ENCODE measurements at regions of chr1 and their contacts with region 1.

Region 1: DNA sequence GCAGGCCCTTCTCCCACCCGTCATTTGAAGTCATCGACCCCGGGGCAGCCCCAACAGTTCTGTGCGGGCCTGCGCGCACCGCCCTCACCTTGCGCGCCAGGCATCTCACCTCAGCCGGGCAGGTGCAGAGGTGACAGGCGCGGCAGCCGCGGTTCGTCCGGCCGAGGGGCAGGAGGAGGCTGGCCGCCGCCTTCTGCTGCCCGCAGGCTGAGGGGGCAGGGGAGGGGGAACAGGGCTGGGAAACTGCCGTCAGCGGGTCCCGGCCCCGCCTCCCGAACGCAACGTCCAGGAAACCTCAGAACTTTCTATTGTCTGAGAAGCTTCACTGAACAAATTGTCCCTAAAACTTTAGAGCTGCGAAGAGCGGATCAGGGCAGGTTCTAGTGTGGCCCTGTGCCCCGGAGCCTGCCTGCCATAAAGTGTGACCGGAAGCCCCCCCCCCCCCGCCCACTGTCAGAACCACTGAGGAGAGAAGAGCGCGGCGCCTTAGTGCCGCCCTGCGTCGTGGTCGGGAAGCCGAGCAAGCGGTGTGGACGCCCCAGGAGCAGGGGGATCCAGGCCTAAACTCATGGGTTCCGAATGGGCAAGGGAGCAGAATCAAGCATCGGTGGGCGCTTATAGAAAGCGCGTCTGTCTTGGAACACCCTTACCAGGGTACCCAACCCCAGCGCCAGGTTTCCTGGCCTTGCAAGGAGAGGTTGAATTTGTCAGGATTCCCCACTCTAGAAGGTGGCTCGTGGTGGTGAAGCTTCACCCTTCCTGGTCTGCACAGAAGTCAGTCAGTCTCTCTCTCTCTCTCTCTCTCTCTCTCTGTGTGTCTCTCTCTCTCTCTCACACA is 13.3 kb upstream of the TBX15 start:
- DNase-seq: no peak
- H3K4me3 ChIP-seq: peak overlapping the region in 2 of 7 experiments; percentile 29 to 39
- H3K27ac ChIP-seq: no peak overlapping the region
- H3K4me1 ChIP-seq: peaks cover 0 to 23% (median 12%) of the 10 kb centered on the region in 4 experiments
- H3K27me3 ChIP-seq: peaks cover 26 to 100% (median 61%) of the 10 kb centered on the region in 5 experiments

Region 2: DNA sequence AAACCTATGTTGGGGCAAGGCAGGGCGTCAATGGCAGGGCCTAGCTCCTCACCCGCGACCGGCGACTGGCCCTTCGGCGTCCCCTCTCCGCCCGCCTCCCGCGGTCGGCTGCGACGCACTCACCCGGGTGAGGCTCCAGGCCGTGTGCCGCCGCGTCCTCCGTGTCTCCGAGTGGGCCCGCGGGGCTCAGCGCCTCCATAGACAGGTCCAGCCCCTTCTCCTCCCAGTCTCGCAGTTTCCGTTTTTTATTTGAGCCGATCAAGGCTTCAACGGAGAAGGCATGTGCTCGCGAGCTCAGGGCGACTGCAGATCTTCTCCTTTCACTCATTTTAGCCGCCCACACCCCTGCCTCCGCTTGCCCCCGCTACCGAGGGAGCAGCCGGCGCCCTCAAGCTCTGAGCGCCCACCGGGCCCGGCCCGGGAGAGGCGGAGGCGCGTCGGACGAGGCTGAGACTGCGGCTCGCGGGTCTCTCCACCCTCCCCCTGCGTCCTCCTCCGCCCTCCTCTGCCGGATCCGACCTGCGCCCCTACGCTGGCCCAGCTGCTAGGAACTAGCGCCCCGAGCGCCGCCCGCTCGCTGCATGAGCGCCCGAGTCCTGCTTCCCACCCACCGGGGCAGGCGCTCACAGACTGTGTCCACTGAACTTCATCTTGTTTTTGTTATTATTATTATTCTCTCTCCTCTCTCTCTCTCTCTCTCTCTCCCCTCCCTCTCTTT is 13.8 kb before region 1 on chr1:
- CTCF ChIA-PET with region 1: interaction called, 29 read pairs
- POLR2A ChIA-PET with region 1: no interaction called
- DNase-seq: peak in 2 of 3 donors; percentile 56 to 67
- H3K4me3 ChIP-seq: peak overlapping the region in 6 of 7 experiments; percentile 9 to 67 (median 24)
- H3K27ac ChIP-seq: no peak overlapping the region
- H3K4me1 ChIP-seq: peaks cover 0 to 42% (median 35%) of the 10 kb centered on the region in 4 experiments
- H3K27me3 ChIP-seq: peaks cover 12 to 100% (median 71%) of the 10 kb centered on the region in 5 experiments

Region 3: GRCh38 chr1:119015547-119015946 is 14.1 kb after region 1 on chr1:
- CTCF ChIA-PET with region 1: no interaction called
- POLR2A ChIA-PET with region 1: no interaction called
- DNase-seq: no peak
- H3K4me3 ChIP-seq: no peak overlapping the region
- H3K27ac ChIP-seq: no peak overlapping the region
- H3K4me1 ChIP-seq: no peaks in the 10 kb centered on the region
- H3K27me3 ChIP-seq: peaks cover 0 to 19% (median 9%) of the 10 kb centered on the region in 5 experiments